PC-3 (cell line): ENCODE measurements at regions of chr7 and their contacts with region 1.

Region 1: DNA sequence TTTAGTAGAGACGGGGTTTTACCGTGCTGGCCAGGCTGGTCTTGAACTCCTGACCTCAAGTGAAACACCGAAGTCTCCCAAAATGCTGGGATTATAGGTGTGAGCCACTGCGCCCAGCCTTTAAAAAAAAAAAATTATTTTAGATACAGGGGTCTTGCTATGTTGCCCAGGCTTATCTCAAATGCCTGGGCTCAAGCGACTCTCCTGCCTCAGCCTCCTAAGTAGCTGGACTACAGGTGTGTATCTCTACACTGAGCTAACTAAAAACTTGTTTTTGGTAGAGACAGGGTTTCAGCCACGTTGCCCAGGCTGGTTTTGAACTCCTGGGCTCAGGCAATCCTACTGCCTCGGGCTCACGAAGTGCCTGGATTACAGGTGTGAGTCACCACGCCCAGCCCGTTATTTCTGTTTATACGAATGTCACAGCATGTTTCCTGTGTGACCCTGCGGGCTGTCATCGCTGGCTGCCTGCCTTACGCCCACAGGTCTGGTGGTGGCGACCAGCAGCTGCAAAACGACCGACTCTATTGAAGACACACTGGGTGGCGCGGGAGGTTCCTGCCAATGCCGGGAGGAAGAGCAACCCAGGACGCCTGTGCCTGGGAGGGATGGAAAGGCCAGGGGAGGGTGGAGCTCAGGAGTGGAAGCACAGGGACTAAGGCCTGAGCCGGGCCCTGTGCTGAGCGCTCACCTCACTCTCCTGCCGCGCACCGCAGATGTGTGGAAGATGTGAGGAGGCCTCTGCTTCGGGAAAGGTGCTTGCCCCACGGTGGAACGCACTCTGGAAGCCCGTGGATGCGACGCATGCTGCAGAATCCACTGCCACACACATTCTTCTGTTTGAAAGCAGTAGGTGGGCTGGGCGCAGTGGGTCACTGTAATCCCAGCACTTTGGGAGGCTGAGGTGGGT is 32.8 kb downstream of the AMZ1 start:
- DNase-seq: peak; percentile 96
- ATAC-seq: peak; percentile 96
- H3K4me3 ChIP-seq: no peak overlapping the region
- H3K27ac ChIP-seq: peak overlapping the region; percentile 45
- H3K4me1 ChIP-seq: 0 out of 2 replicates have a peak, but pooled peaks cover 3% of the 10 kb centered on the region
- H3K27me3 ChIP-seq: no peaks in the 10 kb centered on the region
- CTCF ChIP-seq: peak; percentile 69

Region 2: DNA sequence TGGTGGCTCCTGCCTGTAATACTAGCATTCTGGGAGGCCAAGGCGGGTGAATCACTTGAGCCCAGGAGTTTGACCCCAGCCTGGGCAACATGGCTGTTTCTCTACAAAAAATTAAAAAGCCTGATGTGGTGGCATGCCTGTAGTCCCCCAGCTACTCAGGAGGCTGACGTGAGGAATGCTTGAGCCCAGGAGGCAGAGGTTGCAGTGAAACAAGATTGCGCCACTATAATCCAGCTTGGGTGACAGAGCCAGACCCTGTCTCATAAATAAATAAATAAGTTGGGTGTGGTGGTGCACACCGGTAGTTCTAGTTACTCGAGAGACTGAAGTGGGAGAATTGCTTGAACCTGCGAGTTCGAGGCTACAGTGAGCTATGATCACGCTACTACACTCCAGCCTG is 58.2 kb after region 1 on chr7:
- CTCF ChIA-PET with region 1: no interaction called
- POLR2A ChIA-PET with region 1: no interaction called
- intact Hi-C with region 1: no loop called
- DNase-seq: peak; percentile 11
- ATAC-seq: no peak
- H3K4me3 ChIP-seq: no peak overlapping the region
- H3K27ac ChIP-seq: no peak overlapping the region
- H3K4me1 ChIP-seq: peaks cover 30% of the 10 kb centered on the region
- H3K27me3 ChIP-seq: no peaks in the 10 kb centered on the region
- CTCF ChIP-seq: no peak

Region 3: GRCh38 chr7:2844165-2844898 is 123.5 kb after region 1 on chr7 and contains the start of gene GNA12:
- CTCF ChIA-PET with region 1: no interaction called
- POLR2A ChIA-PET with region 1: interaction called, 3 read pairs
- intact Hi-C with region 1: loop called (anchors 1 kb)
- DNase-seq: peak; percentile 99
- ATAC-seq: peak; percentile 94
- H3K4me3 ChIP-seq: peak within 1 kb of the TSS; percentile 77
- H3K27ac ChIP-seq: no peak within 1 kb of the TSS
- H3K4me1 ChIP-seq: peaks cover 18% of the 10 kb centered on the region
- H3K27me3 ChIP-seq: no peaks in the 10 kb centered on the region
- CTCF ChIP-seq: no peak
- total RNA-seq, gene GNA12: 15.0 and 26.8 TPM in 2 replicates